H1 (cell line): ENCODE measurements at regions of chr18 and their contacts with region 1.

Region 1: GRCh38 chr18:76803814-76804213 is 18.5 kb upstream of the ZNF236 start:
- DNase-seq: peak in 1 of 2 experiments; percentile 88
- H3K4me3 ChIP-seq: no peak overlapping the region
- H3K27ac ChIP-seq: no peak overlapping the region
- H3K4me1 ChIP-seq: peaks cover 0 to 2% (median 0%) of the 10 kb centered on the region in 4 experiments; a peak in 2 of 7 replicates
- H3K27me3 ChIP-seq: no peaks in the 10 kb centered on the region
- CTCF ChIP-seq: peak; percentile 78 to 92 (median 85)
- EP300 ChIP-seq: no peak
- POLR2A ChIP-seq: no peak
- RAD21 ChIP-seq: peak; percentile 66 to 72

Region 2: DNA sequence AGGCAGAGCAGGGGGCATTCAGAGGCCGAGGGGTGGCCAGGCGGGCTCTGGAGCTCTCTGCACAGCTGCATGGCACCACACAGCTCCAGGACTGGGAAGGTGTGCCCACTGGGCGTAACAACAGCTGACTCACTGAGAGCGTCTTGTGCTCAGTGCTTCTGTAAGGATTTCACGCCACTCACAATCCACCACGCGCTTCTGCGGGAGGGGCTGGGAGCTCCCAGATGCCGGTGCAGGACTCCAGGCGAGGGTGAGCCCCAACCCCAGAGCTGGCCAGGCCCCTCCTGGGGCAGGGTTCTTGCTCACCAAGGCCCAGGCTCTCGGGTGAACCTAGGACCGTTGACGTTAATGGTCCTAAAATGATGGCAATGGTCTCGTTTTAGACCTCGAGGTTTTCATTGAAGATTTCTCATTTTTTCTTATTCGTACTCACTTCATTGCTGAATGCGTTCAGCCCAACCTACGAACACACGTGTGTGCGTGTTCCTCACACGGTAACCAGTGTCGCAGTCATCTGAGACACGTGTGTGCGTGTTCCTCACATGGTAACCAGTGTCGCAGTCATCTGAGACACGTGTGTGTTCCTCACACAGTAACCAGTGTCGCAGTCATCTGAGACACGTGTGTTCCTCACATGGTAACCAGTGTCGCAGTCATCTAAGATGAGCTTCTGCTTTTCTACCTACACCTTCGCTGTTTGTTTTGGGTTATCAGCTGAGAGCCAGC is 19.9 kb before region 1 on chr18:
- CTCF ChIA-PET with region 1: interaction called, 72 read pairs
- POLR2A ChIA-PET with region 1: no interaction called
- DNase-seq: no peak
- H3K4me3 ChIP-seq: no peak overlapping the region
- H3K27ac ChIP-seq: no peak overlapping the region
- H3K4me1 ChIP-seq: peaks cover 0 to 3% (median 0%) of the 10 kb centered on the region in 4 experiments; a peak in 2 of 7 replicates
- H3K27me3 ChIP-seq: no peaks in the 10 kb centered on the region
- CTCF ChIP-seq: no peak
- EP300 ChIP-seq: no peak
- POLR2A ChIP-seq: no peak
- RAD21 ChIP-seq: no peak

Region 3: GRCh38 chr18:76791106-76791505 is 12.7 kb before region 1 on chr18:
- CTCF ChIA-PET with region 1: interaction called, 72 read pairs
- POLR2A ChIA-PET with region 1: no interaction called
- DNase-seq: no peak
- H3K4me3 ChIP-seq: no peak overlapping the region
- H3K27ac ChIP-seq: no peak overlapping the region
- H3K4me1 ChIP-seq: peaks cover 0 to 6% (median 0%) of the 10 kb centered on the region in 4 experiments; a peak in 2 of 7 replicates
- H3K27me3 ChIP-seq: no peaks in the 10 kb centered on the region
- CTCF ChIP-seq: no peak
- EP300 ChIP-seq: no peak
- POLR2A ChIP-seq: no peak
- RAD21 ChIP-seq: no peak

Region 4: DNA sequence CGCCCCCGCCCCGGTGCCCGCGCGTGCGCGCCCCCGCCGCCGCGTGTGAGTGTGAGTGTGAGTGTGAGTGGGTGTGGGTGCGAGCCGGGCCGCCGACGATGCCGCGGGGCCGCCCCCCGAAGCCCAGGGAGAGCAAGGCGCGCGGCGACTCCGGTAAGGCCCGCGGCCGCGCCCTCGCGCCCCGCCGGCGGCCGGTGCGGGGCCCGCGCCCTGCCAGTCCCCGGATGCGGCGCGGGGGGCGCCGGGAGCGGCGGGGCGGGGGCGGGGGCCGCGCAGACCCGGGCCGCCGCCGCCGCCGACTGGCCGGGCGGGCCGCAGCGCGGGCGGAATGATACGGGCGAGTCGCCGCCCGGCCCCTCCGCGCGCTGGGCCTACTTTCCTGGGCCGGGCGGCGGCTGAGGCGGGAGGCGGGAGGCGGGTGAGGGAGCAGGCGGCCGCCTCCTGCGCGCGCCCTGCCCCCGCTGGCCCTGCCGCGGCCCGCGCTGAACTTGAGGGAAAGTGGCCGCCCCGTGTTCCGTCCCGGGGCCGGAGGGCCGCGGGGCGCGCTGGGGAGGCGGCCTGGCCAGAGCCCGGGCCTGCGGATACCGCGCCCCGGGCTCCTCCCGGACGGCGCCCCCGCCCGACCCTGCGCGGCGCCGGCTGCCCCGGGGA is 18.8 kb after region 1 on chr18 and contains the start of gene ZNF236:
- CTCF ChIA-PET with region 1: interaction called, 71 read pairs
- POLR2A ChIA-PET with region 1: interaction called, 14 read pairs
- DNase-seq: peak in 1 of 2 experiments; percentile 69
- H3K4me3 ChIP-seq: peak within 1 kb of the TSS; percentile 94 to 99 (median 96)
- H3K27ac ChIP-seq: peak within 1 kb of the TSS; percentile 79
- H3K4me1 ChIP-seq: peaks cover 0 to 3% (median 1%) of the 10 kb centered on the region in 4 experiments; a peak in 4 of 7 replicates
- H3K27me3 ChIP-seq: no peaks in the 10 kb centered on the region
- CTCF ChIP-seq: no peak
- EP300 ChIP-seq: peak in 1 of 2 experiments; percentile 78; a peak in 1 of 3 replicates
- POLR2A ChIP-seq: peak; percentile 77 to 80
- RAD21 ChIP-seq: no peak
- total RNA-seq, gene ZNF236: 14.2 and 14.5 TPM in 2 replicates

Region 5: GRCh38 chr18:76859474-76860339 is 55.9 kb after region 1 on chr18:
- CTCF ChIA-PET with region 1: interaction called, 26 read pairs
- POLR2A ChIA-PET with region 1: no interaction called
- DNase-seq: no peak
- H3K4me3 ChIP-seq: no peak overlapping the region
- H3K27ac ChIP-seq: no peak overlapping the region
- H3K4me1 ChIP-seq: 0 out of 7 replicates have a peak, but pooled peaks cover 0 to 4% (median 2%) of the 10 kb centered on the region in 4 experiments
- H3K27me3 ChIP-seq: no peaks in the 10 kb centered on the region
- CTCF ChIP-seq: no peak
- EP300 ChIP-seq: no peak
- POLR2A ChIP-seq: no peak
- RAD21 ChIP-seq: no peak

Region 6: GRCh38 chr18:76875390-76876325 is 71.8 kb after region 1 on chr18:
- CTCF ChIA-PET with region 1: interaction called, 16 read pairs
- POLR2A ChIA-PET with region 1: no interaction called
- DNase-seq: peak in 1 of 2 experiments; percentile 76
- H3K4me3 ChIP-seq: no peak overlapping the region
- H3K27ac ChIP-seq: no peak overlapping the region
- H3K4me1 ChIP-seq: no peaks in the 10 kb centered on the region
- H3K27me3 ChIP-seq: no peaks in the 10 kb centered on the region
- CTCF ChIP-seq: peak; percentile 42 to 79 (median 62)
- EP300 ChIP-seq: no peak
- POLR2A ChIP-seq: peak; percentile 48 to 85
- RAD21 ChIP-seq: peak; percentile 68 to 74